CD4-positive, alpha-beta memory T cell (primary cell): ENCODE measurements at regions of chr2 and their contacts with region 1.

Region 1: GRCh38 chr2:160406591-160407392 is 86.8 kb downstream of the RBMS1 start:
- DNase-seq: peak; percentile 79 to 96 (median 86)
- H3K4me3 ChIP-seq: peak overlapping the region; percentile 56 to 87
- H3K4me3 Mint-ChIP-seq: peak overlapping the region; percentile 90 to 98 (median 92)
- H3K27ac ChIP-seq: peak overlapping the region; percentile 73
- H3K27ac Mint-ChIP-seq: peak overlapping the region; percentile 91 to 99 (median 91)
- H3K4me1 ChIP-seq: peaks cover 82% of the 10 kb centered on the region
- H3K4me1 Mint-ChIP-seq: peaks cover 69 to 88% (median 78%) of the 10 kb centered on the region in 4 donors
- H3K27me3 ChIP-seq: no peaks in the 10 kb centered on the region
- H3K27me3 Mint-ChIP-seq: no peaks in the 10 kb centered on the region

Region 2: GRCh38 chr2:159712143-159712928 is 694.5 kb before region 1 on chr2 and contains the start of gene MARCHF7:
- CTCF ChIA-PET with region 1: no interaction called
- POLR2A ChIA-PET with region 1: interaction called, 3 read pairs
- intact Hi-C with region 1: loop called (anchors 5 kb)
- DNase-seq: peak; percentile 97 to 100 (median 98)
- H3K4me3 ChIP-seq: peak within 1 kb of the TSS; percentile 88 to 98
- H3K4me3 Mint-ChIP-seq: peak within 1 kb of the TSS; percentile 97 to 100 (median 99)
- H3K27ac ChIP-seq: peak within 1 kb of the TSS; percentile 92
- H3K27ac Mint-ChIP-seq: peak within 1 kb of the TSS; percentile 90 to 100 (median 100)
- H3K4me1 ChIP-seq: peaks cover 53% of the 10 kb centered on the region
- H3K4me1 Mint-ChIP-seq: peaks cover 36 to 63% (median 49%) of the 10 kb centered on the region in 4 donors
- H3K27me3 ChIP-seq: no peaks in the 10 kb centered on the region
- H3K27me3 Mint-ChIP-seq: no peaks in the 10 kb centered on the region
- total RNA-seq, gene MARCHF7: 113 to 115 TPM

Region 3: GRCh38 chr2:159722580-159722979 is 684.2 kb before region 1 on chr2:
- CTCF ChIA-PET with region 1: no interaction called
- POLR2A ChIA-PET with region 1: no interaction called
- intact Hi-C with region 1: no loop called
- DNase-seq: no peak
- H3K4me3 ChIP-seq: no peak overlapping the region
- H3K4me3 Mint-ChIP-seq: peak overlapping the region in 6 of 8 donors; percentile 16 to 59 (median 38)
- H3K27ac ChIP-seq: no peak overlapping the region
- H3K27ac Mint-ChIP-seq: peak overlapping the region in 1 of 7 donors; percentile 42
- H3K4me1 ChIP-seq: peaks cover 85% of the 10 kb centered on the region
- H3K4me1 Mint-ChIP-seq: peaks cover 59 to 99% (median 81%) of the 10 kb centered on the region in 4 donors
- H3K27me3 ChIP-seq: no peaks in the 10 kb centered on the region
- H3K27me3 Mint-ChIP-seq: no peaks in the 10 kb centered on the region

Region 4: DNA sequence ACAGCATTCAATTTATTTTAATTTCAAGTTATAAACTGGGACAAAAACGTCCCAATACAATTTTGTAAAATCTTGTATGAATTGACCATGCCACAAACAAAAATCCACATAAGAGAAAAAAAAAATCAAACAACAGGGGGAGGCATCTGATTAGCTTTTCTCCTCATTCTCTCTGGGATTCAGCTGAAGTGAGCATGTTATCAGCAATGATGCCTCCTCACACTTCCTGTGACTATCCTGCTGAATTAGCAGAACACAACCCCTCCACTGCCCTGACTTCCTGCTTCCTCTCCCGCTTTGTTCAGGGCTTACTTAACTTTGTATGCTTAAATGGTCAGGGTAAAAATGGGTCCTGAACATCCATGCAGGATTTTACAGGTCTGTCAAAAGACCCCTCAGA is 74.5 kb before region 1 on chr2:
- CTCF ChIA-PET with region 1: interaction called, 3 read pairs
- POLR2A ChIA-PET with region 1: interaction called, 4 read pairs
- intact Hi-C with region 1: loop called (anchors 5 kb)
- DNase-seq: peak in 3 of 5 donors; percentile 27 to 43 (median 29)
- H3K4me3 ChIP-seq: no peak overlapping the region
- H3K4me3 Mint-ChIP-seq: peak overlapping the region in 7 of 8 donors; percentile 32 to 78 (median 59)
- H3K27ac ChIP-seq: peak overlapping the region; percentile 6
- H3K27ac Mint-ChIP-seq: peak overlapping the region; percentile 25 to 83 (median 66)
- H3K4me1 ChIP-seq: peaks cover 93% of the 10 kb centered on the region
- H3K4me1 Mint-ChIP-seq: peaks cover 80 to 100% (median 89%) of the 10 kb centered on the region in 4 donors
- H3K27me3 ChIP-seq: no peaks in the 10 kb centered on the region
- H3K27me3 Mint-ChIP-seq: no peaks in the 10 kb centered on the region

Region 5: DNA sequence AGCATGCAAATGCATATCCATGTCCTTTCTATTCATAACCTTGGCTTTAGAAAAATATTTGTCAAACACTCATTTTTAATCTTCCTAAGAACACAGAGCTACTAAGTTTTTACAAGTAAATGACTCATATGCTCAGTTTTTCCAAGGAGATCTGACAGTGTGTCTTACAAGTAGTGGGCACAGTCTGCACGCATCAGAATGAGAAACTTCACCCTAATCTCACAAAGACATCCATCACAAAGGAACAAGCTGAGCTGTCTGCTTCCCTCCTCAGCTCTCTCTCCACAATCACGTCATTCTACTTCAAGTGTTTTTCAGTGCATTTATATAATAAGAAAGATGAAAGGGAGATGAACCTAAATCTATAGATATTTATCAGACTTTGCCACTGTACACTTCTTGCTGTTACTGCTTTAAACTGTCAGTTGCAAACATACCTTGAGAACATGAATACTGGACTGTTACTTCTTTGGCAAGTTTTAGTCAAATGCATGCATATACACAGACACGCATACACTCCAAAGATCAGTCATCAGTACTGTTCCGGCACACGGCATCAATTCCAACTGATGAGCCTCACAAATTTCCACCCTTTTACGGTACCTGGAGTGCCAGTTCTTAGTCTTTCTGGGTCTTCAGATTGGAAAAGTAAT is 11.1 kb after region 1 on chr2:
- CTCF ChIA-PET with region 1: interaction called, 4 read pairs
- POLR2A ChIA-PET with region 1: interaction called, 22 read pairs
- intact Hi-C with region 1: loop called (anchors 1 kb)
- DNase-seq: peak in 3 of 5 donors; percentile 28 to 71 (median 37)
- H3K4me3 ChIP-seq: no peak overlapping the region
- H3K4me3 Mint-ChIP-seq: peak overlapping the region in 4 of 8 donors; percentile 1 to 55 (median 38)
- H3K27ac ChIP-seq: no peak overlapping the region
- H3K27ac Mint-ChIP-seq: peak overlapping the region; percentile 2 to 84 (median 34)
- H3K4me1 ChIP-seq: peaks cover 49% of the 10 kb centered on the region
- H3K4me1 Mint-ChIP-seq: peaks cover 45 to 81% (median 59%) of the 10 kb centered on the region in 4 donors
- H3K27me3 ChIP-seq: no peaks in the 10 kb centered on the region
- H3K27me3 Mint-ChIP-seq: no peaks in the 10 kb centered on the region

Region 6: GRCh38 chr2:160465406-160465805 is 58.6 kb after region 1 on chr2:
- CTCF ChIA-PET with region 1: no interaction called
- POLR2A ChIA-PET with region 1: no interaction called
- intact Hi-C with region 1: no loop called
- DNase-seq: no peak
- H3K4me3 ChIP-seq: no peak overlapping the region
- H3K4me3 Mint-ChIP-seq: peak overlapping the region in 6 of 8 donors; percentile 6 to 59 (median 30)
- H3K27ac ChIP-seq: no peak overlapping the region
- H3K27ac Mint-ChIP-seq: peak overlapping the region in 6 of 7 donors; percentile 8 to 56 (median 14)
- H3K4me1 ChIP-seq: peaks cover 50% of the 10 kb centered on the region
- H3K4me1 Mint-ChIP-seq: peaks cover 41 to 87% (median 69%) of the 10 kb centered on the region in 4 donors
- H3K27me3 ChIP-seq: no peaks in the 10 kb centered on the region
- H3K27me3 Mint-ChIP-seq: no peaks in the 10 kb centered on the region

Region 7: DNA sequence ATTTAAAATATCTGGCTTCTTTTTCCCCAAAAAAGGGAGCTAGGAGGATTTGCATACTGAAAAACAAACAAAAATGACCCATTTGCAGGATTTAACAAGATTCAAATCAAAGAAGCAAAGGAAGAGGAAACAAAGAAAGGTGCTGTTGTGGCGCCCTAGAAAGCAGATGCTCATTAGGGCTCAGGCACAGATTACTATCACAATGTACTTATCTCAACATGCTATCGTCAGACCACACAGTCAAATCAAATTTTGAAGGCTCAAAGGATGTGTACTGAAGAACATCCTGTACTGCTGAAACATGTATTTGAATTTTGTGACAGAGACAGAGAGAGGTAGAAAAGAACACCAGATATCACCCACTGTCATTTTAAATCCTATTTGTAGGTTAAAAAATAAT is 75.9 kb after region 1 on chr2:
- CTCF ChIA-PET with region 1: no interaction called
- POLR2A ChIA-PET with region 1: interaction called, 5 read pairs
- intact Hi-C with region 1: loop called (anchors 2 kb)
- DNase-seq: peak; percentile 68 to 82 (median 77)
- H3K4me3 ChIP-seq: no peak overlapping the region
- H3K4me3 Mint-ChIP-seq: peak overlapping the region in 7 of 8 donors; percentile 53 to 84 (median 77)
- H3K27ac ChIP-seq: peak overlapping the region; percentile 39
- H3K27ac Mint-ChIP-seq: peak overlapping the region; percentile 84 to 94 (median 92)
- H3K4me1 ChIP-seq: peaks cover 77% of the 10 kb centered on the region
- H3K4me1 Mint-ChIP-seq: peaks cover 51 to 87% (median 67%) of the 10 kb centered on the region in 4 donors
- H3K27me3 ChIP-seq: no peaks in the 10 kb centered on the region
- H3K27me3 Mint-ChIP-seq: no peaks in the 10 kb centered on the region